H1 (cell line): ENCODE measurements at regions of chr22 and their contacts with region 1.

Region 1: GRCh38 chr22:38700270-38700788 is 414 bp downstream of the JOSD1 start:
- DNase-seq: no peak
- H3K4me3 ChIP-seq: peak overlapping the region; percentile 74 to 100 (median 88)
- H3K27ac ChIP-seq: peak overlapping the region; percentile 97
- H3K4me1 ChIP-seq: peaks cover 7 to 19% (median 12%) of the 10 kb centered on the region in 4 experiments; a peak in 6 of 7 replicates
- H3K27me3 ChIP-seq: no peaks in the 10 kb centered on the region
- CTCF ChIP-seq: no peak
- EP300 ChIP-seq: no peak
- POLR2A ChIP-seq: no peak
- RAD21 ChIP-seq: no peak

Region 2: DNA sequence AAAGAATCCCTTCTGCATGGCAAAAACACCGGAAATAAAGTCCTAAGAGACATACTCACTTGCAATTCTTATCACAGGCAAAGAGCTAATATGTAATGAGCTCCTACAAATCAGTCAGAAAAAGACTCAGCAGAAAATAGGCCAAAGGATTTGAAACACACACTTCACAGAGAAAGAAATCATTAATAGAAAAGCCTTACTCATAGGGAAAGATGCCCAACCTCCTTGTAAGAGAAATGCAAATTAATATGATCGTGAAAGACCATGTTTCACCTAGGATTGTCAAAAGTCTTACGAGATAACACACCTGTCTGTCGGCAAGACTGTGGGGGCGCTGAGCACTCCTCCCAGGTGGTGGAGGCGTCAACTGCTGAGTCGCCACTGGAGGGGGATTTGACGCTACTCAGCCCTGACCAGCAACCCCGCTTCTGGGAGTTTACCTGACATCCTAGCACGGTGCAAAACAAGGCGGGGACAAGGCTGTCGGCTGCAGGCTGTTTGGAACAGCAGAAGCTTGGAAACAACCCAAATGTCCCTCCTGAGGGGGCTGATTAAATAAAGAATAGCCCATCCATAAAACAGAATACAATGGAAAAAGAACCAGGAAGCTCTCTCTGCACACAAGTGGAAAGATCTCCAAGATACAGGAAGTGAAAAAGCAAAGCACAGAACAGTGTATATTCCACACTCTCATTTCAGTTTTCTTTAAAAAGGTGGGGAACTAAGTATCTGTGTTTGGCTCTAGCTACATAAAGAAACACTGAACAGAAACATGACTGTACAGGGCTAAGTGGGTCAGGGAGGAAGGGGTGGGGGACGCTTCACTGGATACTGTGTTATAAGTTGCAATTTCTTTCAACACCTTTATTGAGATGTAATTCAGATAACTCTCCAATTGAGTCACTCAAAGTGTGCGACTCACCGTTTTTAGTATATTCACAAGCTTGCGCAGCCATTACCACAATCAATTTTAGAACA is 394.6 kb before region 1 on chr22:
- CTCF ChIA-PET with region 1: no interaction called
- POLR2A ChIA-PET with region 1: no interaction called
- DNase-seq: no peak
- H3K4me3 ChIP-seq: no peak overlapping the region
- H3K27ac ChIP-seq: no peak overlapping the region
- H3K4me1 ChIP-seq: peaks cover 2 to 18% (median 8%) of the 10 kb centered on the region in 4 experiments
- H3K27me3 ChIP-seq: no peaks in the 10 kb centered on the region
- CTCF ChIP-seq: peak; percentile 59 to 73 (median 65)
- EP300 ChIP-seq: no peak
- POLR2A ChIP-seq: no peak
- RAD21 ChIP-seq: peak; percentile 59 to 67

Region 3: DNA sequence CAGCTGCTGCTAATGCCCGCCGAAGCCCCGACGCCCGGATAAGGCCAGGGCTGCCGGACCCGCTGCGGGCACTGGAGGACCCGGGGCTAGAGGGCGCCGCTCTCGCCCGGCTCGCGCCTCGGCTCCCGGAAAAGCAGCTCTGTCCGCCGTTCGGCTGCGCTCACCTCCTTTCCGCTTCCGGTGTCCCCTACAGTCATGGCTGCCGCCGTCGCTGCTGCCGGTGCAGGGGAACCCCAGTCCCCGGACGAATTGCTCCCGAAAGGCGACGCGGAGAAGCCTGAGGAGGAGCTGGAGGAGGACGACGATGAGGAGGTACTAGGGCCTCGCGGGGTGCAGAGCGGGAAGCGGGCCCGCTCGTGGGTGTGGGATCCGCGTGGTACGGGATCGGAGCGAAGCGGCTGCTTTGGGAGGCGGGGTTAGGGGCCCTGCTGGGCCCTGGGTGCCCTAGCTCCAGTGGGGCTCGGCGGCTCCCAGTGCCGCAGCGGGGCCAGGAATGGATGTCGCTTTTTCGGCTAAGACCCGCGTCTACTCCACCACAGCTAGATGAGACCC is 18.5 kb before region 1 on chr22 and contains the start of gene TOMM22:
- CTCF ChIA-PET with region 1: interaction called, 11 read pairs
- POLR2A ChIA-PET with region 1: interaction called, 123 read pairs
- DNase-seq: peak; percentile 73 to 90
- H3K4me3 ChIP-seq: peak within 1 kb of the TSS; percentile 86 to 96 (median 94)
- H3K27ac ChIP-seq: peak within 1 kb of the TSS; percentile 90
- H3K4me1 ChIP-seq: peaks cover 0 to 3% (median 1%) of the 10 kb centered on the region in 4 experiments; a peak in 3 of 7 replicates
- H3K27me3 ChIP-seq: no peaks in the 10 kb centered on the region
- CTCF ChIP-seq: peak; percentile 66 to 81 (median 79)
- EP300 ChIP-seq: no peak
- POLR2A ChIP-seq: peak; percentile 77 to 94
- RAD21 ChIP-seq: peak; percentile 21 to 43; a peak in 2 of 4 replicates
- total RNA-seq, gene TOMM22: 125 and 138 TPM in 2 replicates

Region 4: DNA sequence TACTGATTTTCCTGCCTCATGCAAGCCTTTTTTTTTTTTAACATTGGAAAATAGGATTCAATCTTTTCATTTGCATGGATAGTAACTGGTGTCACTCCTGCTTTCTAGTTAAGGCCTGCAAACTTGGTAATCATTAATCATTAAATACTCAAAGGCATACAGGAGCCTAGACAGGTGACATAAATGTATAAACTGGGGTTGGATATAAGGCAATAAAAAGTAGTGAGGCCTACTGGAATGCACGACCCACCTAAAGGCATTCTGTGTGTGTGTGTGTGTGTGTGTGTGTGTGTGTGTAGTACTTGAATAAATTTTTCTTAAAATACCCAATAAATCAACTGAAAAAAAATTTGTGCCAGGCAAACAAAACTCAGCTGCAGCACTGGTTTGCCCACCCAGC is 10.7 kb before region 1 on chr22:
- CTCF ChIA-PET with region 1: interaction called, 3 read pairs
- POLR2A ChIA-PET with region 1: interaction called, 123 read pairs
- DNase-seq: no peak
- H3K4me3 ChIP-seq: no peak overlapping the region
- H3K27ac ChIP-seq: no peak overlapping the region
- H3K4me1 ChIP-seq: no peaks in the 10 kb centered on the region
- H3K27me3 ChIP-seq: no peaks in the 10 kb centered on the region
- CTCF ChIP-seq: no peak
- EP300 ChIP-seq: no peak
- POLR2A ChIP-seq: no peak
- RAD21 ChIP-seq: no peak